Cardiac septum (tissue), 1 donor: ENCODE measurements at regions of chr2 and their contacts with region 1.

Region 1: DNA sequence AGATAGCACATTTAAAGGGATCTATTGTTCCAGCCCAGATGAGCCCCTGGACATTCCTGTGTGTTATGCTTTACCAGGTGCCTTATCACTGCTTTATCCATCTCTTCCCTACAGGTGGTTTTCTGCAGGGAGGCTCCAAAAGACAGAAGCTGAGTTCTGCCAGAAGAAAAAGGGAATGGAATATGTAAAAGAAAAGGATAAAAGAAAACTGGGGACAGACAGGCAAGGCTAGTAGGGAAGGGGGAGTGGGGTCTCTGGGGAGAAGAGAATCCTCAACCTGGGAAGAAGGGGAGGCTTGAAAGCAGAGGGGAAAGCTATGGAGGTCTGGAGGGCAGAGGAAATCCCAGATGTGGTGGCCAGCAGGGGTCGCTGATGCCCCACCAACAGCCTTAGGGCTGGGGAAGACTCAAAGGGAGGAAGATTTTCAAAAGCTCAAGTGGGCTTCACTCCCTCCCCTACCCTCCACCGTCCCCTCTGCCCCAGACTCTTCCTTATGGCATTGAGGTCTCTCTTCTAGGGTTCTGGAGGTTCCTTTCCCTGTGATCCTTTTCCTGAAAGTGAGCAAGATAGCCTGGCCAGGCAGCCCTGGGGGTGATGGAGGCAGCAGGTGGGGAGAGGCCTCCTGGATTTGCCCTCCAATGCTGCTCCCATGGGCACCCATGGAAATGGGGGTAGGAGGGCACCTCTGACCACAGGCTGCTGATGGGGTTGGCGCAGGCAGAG is 178.1 kb upstream of the PKDCC start:
- DNase-seq: peak; percentile 81

Region 2: GRCh38 chr2:41922177-41922576 is 52.5 kb after region 1 on chr2:
- intact Hi-C with region 1: loop called (anchors 5 kb)
- DNase-seq: no peak

Region 3: DNA sequence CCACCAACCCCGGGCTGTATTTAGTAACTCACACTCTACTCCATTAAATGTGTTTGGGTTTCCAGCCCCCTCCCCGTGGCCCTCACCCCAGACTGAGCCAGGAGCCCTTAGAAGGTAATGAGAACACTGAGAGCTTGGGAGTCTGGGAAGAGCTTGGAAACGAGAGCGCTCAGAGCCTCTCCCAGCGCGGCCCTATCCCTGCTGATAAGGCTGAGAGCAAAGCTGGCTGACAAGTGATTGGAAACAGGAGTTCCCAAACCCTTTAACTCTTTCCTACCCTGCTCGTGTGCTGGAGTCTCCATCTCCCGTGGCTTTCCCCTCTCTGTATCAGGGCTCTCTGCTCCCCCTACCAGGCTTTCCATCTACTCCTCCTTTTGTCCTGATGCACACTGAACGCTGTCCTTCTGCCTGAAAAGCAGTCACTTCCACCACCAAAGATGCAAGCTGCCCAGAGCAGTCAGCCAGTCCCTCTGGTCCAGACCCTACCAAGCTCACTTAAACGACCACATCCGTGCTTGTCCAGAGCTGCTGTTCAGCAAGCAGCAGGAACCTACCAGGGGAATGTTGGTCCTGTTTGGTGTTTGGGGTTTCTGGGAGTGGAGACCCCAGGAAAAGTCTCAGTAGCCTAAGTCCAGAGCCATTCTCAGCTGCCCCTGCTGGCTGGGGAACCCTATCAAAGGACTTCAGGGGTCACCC is 78.1 kb after region 1 on chr2:
- intact Hi-C with region 1: loop called (anchors 5 kb)
- DNase-seq: no peak

Region 4: DNA sequence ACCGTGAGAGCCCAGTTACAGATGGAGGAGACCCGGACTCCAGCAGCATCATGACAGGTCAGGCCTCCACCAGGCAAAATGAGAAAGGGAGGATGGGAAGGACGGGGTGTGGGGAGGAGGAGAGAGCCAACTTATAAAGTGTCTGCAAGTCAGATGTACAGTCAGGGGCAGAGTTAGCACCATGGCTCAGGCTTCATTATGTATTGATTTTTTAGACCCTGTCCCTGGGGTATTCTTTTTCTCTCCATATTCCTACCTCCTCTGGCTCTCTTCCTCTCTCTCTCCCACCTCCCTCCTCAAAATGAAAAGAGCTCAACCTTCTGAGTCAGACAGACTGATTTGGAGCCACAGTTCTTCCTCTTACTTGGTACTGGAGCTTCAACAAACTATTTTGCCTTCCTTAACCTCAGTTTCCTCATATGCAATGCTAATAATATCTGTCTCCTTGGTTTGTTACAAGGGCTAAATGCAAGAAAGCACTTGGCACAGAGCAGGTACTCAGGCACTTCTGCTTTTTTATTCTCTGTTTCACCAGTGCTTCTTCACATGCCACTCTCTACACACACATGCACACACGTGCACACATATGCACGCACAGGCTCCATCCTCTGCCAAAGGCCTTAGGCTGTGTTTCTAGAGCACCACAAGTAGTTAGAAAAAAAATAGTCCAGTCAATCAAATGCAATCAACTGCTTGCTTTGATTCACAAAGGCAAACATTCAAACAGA is 85.8 kb after region 1 on chr2:
- intact Hi-C with region 1: loop called (anchors 5 kb)
- DNase-seq: no peak

Region 5: GRCh38 chr2:42086500-42086953 is 216.8 kb after region 1 on chr2:
- intact Hi-C with region 1: loop called (anchors 1 kb)
- DNase-seq: no peak

Region 6: GRCh38 chr2:42147641-42148274 is 278.1 kb after region 1 on chr2:
- intact Hi-C with region 1: no loop called
- DNase-seq: no peak